HepG2 (cell line): ENCODE measurements at regions of chr2 and their contacts with region 1.

Region 1: GRCh38 chr2:207847807-207848544 is 78.3 kb upstream of the FZD5 start:
- DNase-seq: peak; percentile 99
- ATAC-seq: peak; percentile 83
- H3K4me3 ChIP-seq: peak overlapping the region; percentile 13 to 27 (median 25); a peak in 3 of 6 replicates
- H3K27ac ChIP-seq: peak overlapping the region; percentile 97
- H3K4me1 ChIP-seq: peaks cover 81% of the 10 kb centered on the region
- H3K27me3 ChIP-seq: no peaks in the 10 kb centered on the region
- CTCF ChIP-seq: peak; percentile 52
- EP300 ChIP-seq: peak; percentile 75 to 97
- POLR2A ChIP-seq: peak in 1 of 2 experiments; percentile 47; a peak in 1 of 4 replicates
- RAD21 ChIP-seq: peak; percentile 22; the same call in 1 of the 2 replicates

Region 2: GRCh38 chr2:207584952-207585351 is 263.0 kb before region 1 on chr2:
- CTCF ChIA-PET with region 1: no interaction called
- POLR2A ChIA-PET with region 1: no interaction called
- in situ Hi-C with region 1: no loop called
- intact Hi-C with region 1: no loop called
- DNase-seq: no peak
- ATAC-seq: peak; percentile 42; the same call in 2 of the 3 replicates
- H3K4me3 ChIP-seq: no peak overlapping the region
- H3K27ac ChIP-seq: no peak overlapping the region
- H3K4me1 ChIP-seq: no peaks in the 10 kb centered on the region
- H3K27me3 ChIP-seq: no peaks in the 10 kb centered on the region
- CTCF ChIP-seq: no peak
- EP300 ChIP-seq: no peak
- POLR2A ChIP-seq: no peak
- RAD21 ChIP-seq: no peak

Region 3: DNA sequence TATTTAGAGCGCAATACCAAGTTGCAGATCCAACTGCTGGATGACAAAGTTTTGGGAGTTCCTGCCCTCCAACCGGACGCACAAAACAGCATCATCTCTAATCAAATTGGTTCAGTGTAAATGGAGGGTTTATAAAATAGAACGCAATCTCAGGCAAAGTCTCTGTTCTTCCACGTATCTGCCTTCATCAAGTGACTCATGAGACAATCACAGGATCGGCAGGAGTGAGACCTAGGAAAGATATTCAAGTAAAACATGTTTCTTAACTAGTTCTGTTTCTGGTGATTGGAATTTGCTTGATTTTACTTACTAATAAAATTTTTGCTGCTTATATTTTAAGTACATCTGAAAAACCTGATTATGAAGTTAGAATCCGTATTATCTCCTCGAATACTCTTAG is 85.8 kb before region 1 on chr2:
- CTCF ChIA-PET with region 1: interaction called, 3 read pairs
- POLR2A ChIA-PET with region 1: interaction called, 232 read pairs
- in situ Hi-C with region 1: no loop called
- intact Hi-C with region 1: no loop called
- DNase-seq: no peak
- ATAC-seq: no peak
- H3K4me3 ChIP-seq: no peak overlapping the region
- H3K27ac ChIP-seq: peak overlapping the region; percentile 5
- H3K4me1 ChIP-seq: peaks cover 61% of the 10 kb centered on the region
- H3K27me3 ChIP-seq: no peaks in the 10 kb centered on the region; a peak in 1 of 5 replicates
- CTCF ChIP-seq: no peak
- EP300 ChIP-seq: no peak
- POLR2A ChIP-seq: no peak
- RAD21 ChIP-seq: no peak

Region 4: DNA sequence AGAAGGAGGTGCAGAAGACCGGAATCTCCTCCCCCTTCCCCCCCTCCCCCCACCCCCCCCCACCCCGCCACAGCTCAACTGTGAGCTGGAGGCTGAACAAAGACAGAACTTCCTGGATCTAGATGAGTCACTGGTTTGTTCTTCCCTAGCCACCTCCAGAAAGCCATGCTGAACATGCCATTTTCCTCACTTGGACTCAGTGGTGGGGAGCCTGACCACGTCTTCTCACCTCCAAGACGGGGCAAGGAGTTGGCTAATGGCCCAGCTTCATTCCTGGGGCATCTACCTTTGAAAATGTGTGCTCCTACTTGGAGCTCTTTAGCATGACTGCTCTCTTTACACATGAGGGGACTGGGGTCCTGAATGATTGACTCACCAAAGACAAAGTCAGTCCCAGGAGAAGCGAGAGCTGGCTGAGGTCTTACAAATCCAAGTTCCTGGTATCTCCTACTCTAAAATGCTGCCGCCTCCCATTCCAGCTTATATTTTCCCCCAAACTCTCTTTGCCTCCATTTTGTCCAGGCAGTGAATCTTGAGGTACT is 55.7 kb before region 1 on chr2:
- CTCF ChIA-PET with region 1: no interaction called
- POLR2A ChIA-PET with region 1: interaction called, 138 read pairs
- in situ Hi-C with region 1: no loop called
- intact Hi-C with region 1: no loop called
- DNase-seq: peak; percentile 84
- ATAC-seq: peak; percentile 66
- H3K4me3 ChIP-seq: peak overlapping the region in 1 of 3 experiments; percentile 49; a peak in 2 of 6 replicates
- H3K27ac ChIP-seq: peak overlapping the region; percentile 82
- H3K4me1 ChIP-seq: peaks cover 73% of the 10 kb centered on the region
- H3K27me3 ChIP-seq: no peaks in the 10 kb centered on the region
- CTCF ChIP-seq: no peak
- EP300 ChIP-seq: peak in 1 of 2 experiments; percentile 16; a peak in 1 of 4 replicates
- POLR2A ChIP-seq: 0 out of 4 replicates have a peak, but pooled peaks have one; percentile 44 to 53
- RAD21 ChIP-seq: no peak

Region 5: GRCh38 chr2:207819839-207820784 is 27.9 kb before region 1 on chr2:
- CTCF ChIA-PET with region 1: no interaction called
- POLR2A ChIA-PET with region 1: interaction called, 288 read pairs
- in situ Hi-C with region 1: no loop called
- intact Hi-C with region 1: loop called (anchors 2 kb)
- DNase-seq: peak; percentile 97
- ATAC-seq: peak; percentile 89
- H3K4me3 ChIP-seq: peak overlapping the region; percentile 41 to 55 (median 53)
- H3K27ac ChIP-seq: peak overlapping the region; percentile 94
- H3K4me1 ChIP-seq: peaks cover 100% of the 10 kb centered on the region
- H3K27me3 ChIP-seq: no peaks in the 10 kb centered on the region
- CTCF ChIP-seq: no peak; the same call in 1 of the 2 replicates
- EP300 ChIP-seq: peak in 1 of 2 experiments; percentile 83; a peak in 3 of 4 replicates
- POLR2A ChIP-seq: peak; percentile 68 to 81
- RAD21 ChIP-seq: peak; percentile 40; the same call in 1 of the 2 replicates

Region 6: GRCh38 chr2:207869784-207870778 is 22.1 kb after region 1 on chr2:
- CTCF ChIA-PET with region 1: no interaction called
- POLR2A ChIA-PET with region 1: interaction called, 158 read pairs
- in situ Hi-C with region 1: no loop called
- intact Hi-C with region 1: loop called (anchors 1 kb)
- DNase-seq: peak; percentile 100
- ATAC-seq: peak; percentile 95
- H3K4me3 ChIP-seq: peak overlapping the region; percentile 3 to 10 (median 3); a peak in 4 of 6 replicates
- H3K27ac ChIP-seq: peak overlapping the region; percentile 81
- H3K4me1 ChIP-seq: peaks cover 57% of the 10 kb centered on the region
- H3K27me3 ChIP-seq: no peaks in the 10 kb centered on the region
- CTCF ChIP-seq: no peak
- EP300 ChIP-seq: peak; percentile 97 to 99
- POLR2A ChIP-seq: peak in 1 of 2 experiments; percentile 57; a peak in 2 of 4 replicates
- RAD21 ChIP-seq: peak; percentile 36; the same call in 1 of the 2 replicates

Region 7: GRCh38 chr2:207926133-207926988 is 78.4 kb after region 1 on chr2:
- CTCF ChIA-PET with region 1: no interaction called
- POLR2A ChIA-PET with region 1: interaction called, 33 read pairs
- in situ Hi-C with region 1: no loop called
- intact Hi-C with region 1: loop called (anchors 1 kb)
- DNase-seq: peak; percentile 96
- ATAC-seq: peak; percentile 97
- H3K4me3 ChIP-seq: peak overlapping the region in 2 of 3 experiments; percentile 5 to 18; a peak in 2 of 6 replicates
- H3K27ac ChIP-seq: peak overlapping the region; percentile 66
- H3K4me1 ChIP-seq: peaks cover 51% of the 10 kb centered on the region
- H3K27me3 ChIP-seq: no peaks in the 10 kb centered on the region
- CTCF ChIP-seq: no peak
- EP300 ChIP-seq: peak; percentile 53 to 79; a peak in 3 of 4 replicates
- POLR2A ChIP-seq: peak in 1 of 2 experiments; percentile 17; a peak in 1 of 4 replicates
- RAD21 ChIP-seq: no peak; the same call in 1 of the 2 replicates

Region 8: GRCh38 chr2:207974216-207974605 is 126.2 kb after region 1 on chr2:
- CTCF ChIA-PET with region 1: no interaction called
- POLR2A ChIA-PET with region 1: interaction called, 4 read pairs
- in situ Hi-C with region 1: no loop called
- intact Hi-C with region 1: loop called (anchors 1 kb)
- DNase-seq: no peak
- ATAC-seq: no peak
- H3K4me3 ChIP-seq: no peak overlapping the region
- H3K27ac ChIP-seq: no peak overlapping the region
- H3K4me1 ChIP-seq: peaks cover 28% of the 10 kb centered on the region
- H3K27me3 ChIP-seq: no peaks in the 10 kb centered on the region
- CTCF ChIP-seq: no peak
- EP300 ChIP-seq: no peak
- POLR2A ChIP-seq: no peak
- RAD21 ChIP-seq: no peak